ENCODE measurements at regions of chr5 and their contacts with region 1.

Region 1: DNA sequence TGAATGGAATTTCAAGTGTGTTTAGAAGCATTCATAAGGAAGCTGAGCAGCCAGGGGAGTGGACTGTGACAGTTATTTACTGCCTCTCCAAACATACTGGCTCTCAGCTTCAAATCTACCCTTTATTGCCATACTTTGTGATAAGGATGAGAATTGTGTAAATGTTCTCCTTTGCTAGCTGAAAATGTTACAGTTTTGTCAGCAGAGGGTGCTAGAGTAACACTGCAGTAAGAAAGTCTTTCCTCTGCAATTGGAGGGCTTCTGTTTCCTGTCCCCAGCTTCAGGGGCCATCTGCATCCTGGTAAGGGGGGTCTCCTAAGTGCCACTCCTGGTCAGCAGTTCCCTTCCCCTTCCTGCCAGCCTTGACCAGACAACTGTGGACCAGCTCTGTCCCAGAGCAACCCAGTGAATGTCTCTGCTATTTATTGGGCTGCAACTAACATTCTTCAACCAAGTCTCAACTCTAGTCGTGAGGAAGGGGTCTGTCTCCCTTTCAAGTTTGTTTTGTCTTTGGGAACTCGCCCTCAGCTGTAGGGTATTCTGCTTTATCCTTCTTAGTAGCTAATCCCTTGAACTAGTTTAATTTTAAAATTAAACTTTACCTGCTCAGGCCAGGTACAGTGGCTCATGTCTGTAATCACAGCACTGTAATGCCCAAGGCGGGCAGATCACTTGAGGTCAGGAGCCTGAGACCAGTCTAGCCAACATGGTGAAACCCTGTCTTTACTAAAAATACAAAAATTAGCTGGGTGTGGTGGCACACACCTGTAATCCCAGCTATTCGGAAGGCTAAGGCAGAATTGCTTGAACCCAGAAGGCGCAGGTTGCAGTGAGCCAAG is 45.3 kb downstream of the RAPGEF6 start:
- DNase-seq: peak in 6 of 9 experiments; percentile 8 to 80 (median 47)
- ATAC-seq: peak; percentile 77
- H3K4me3 ChIP-seq: no peak overlapping the region
- H3K4me3 Mint-ChIP-seq: no peak overlapping the region
- H3K27ac ChIP-seq: no peak overlapping the region
- H3K27ac Mint-ChIP-seq: no peak overlapping the region
- H3K4me1 ChIP-seq: peaks cover 13% of the 10 kb centered on the region
- H3K4me1 Mint-ChIP-seq: peaks cover 50% of the 10 kb centered on the region
- H3K27me3 ChIP-seq: no peaks in the 10 kb centered on the region
- H3K27me3 Mint-ChIP-seq: no peaks in the 10 kb centered on the region
- CTCF ChIP-seq: peak; percentile 89

Region 2: DNA sequence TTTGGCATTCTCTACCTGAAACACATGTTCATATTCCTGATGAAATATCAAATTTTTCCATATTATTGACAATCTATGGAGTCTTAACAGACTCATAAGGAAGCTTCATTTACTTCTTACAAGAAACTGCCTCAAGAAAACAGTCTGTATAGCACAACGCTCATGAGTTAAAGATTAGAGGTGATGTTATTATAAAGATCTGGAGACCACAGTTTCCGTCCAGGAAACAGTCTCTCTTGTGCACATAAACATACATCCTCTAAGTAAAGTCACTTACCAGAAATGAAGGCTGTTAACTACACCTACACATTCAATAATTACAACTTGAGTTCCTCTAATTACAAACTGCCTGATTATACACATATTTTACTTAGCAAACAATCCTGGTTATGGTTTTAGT is 41.6 kb before region 1 on chr5:
- CTCF ChIA-PET with region 1: interaction called, 4 read pairs
- POLR2A ChIA-PET with region 1: interaction called, 3 read pairs
- intact Hi-C with region 1: loop called in 1 of 2 experiments (anchors 5 kb)
- DNase-seq: peak in 2 of 9 experiments; percentile 61 to 78
- ATAC-seq: peak; percentile 95
- H3K4me3 ChIP-seq: peak overlapping the region; percentile 51 to 55
- H3K4me3 Mint-ChIP-seq: peak overlapping the region; percentile 95
- H3K27ac ChIP-seq: peak overlapping the region; percentile 56 to 67
- H3K27ac Mint-ChIP-seq: peak overlapping the region; percentile 97
- H3K4me1 ChIP-seq: peaks cover 44% of the 10 kb centered on the region
- H3K4me1 Mint-ChIP-seq: peaks cover 63% of the 10 kb centered on the region
- H3K27me3 ChIP-seq: no peaks in the 10 kb centered on the region
- H3K27me3 Mint-ChIP-seq: no peaks in the 10 kb centered on the region
- CTCF ChIP-seq: no peak

Region 3: DNA sequence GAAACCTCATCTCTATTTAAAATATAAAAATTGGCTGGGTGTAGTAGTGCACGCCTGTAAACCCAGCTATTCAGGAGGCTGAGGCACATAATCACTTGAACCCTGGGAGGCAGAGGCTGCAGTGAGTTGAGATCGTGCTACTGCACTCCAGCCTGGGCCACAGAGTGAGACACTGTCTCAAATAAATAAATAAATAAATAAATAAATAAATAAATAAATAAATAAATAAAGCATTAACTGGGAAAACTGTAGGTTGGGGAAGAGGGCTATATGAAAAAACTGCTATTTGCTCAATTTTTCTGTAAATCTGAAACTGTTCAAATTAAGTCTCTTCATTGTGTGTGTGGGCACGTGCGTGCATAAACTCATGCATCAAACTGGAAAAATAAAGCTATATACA is 105.2 kb after region 1 on chr5:
- CTCF ChIA-PET with region 1: interaction called, 4 read pairs
- POLR2A ChIA-PET with region 1: no interaction called
- intact Hi-C with region 1: loop called in 1 of 2 experiments (anchors 5 kb)
- DNase-seq: no peak
- ATAC-seq: no peak
- H3K4me3 ChIP-seq: no peak overlapping the region
- H3K4me3 Mint-ChIP-seq: no peak overlapping the region
- H3K27ac ChIP-seq: no peak overlapping the region
- H3K27ac Mint-ChIP-seq: no peak overlapping the region
- H3K4me1 ChIP-seq: no peaks in the 10 kb centered on the region
- H3K4me1 Mint-ChIP-seq: no peaks in the 10 kb centered on the region
- H3K27me3 ChIP-seq: no peaks in the 10 kb centered on the region
- H3K27me3 Mint-ChIP-seq: no peaks in the 10 kb centered on the region
- CTCF ChIP-seq: no peak

Region 4: DNA sequence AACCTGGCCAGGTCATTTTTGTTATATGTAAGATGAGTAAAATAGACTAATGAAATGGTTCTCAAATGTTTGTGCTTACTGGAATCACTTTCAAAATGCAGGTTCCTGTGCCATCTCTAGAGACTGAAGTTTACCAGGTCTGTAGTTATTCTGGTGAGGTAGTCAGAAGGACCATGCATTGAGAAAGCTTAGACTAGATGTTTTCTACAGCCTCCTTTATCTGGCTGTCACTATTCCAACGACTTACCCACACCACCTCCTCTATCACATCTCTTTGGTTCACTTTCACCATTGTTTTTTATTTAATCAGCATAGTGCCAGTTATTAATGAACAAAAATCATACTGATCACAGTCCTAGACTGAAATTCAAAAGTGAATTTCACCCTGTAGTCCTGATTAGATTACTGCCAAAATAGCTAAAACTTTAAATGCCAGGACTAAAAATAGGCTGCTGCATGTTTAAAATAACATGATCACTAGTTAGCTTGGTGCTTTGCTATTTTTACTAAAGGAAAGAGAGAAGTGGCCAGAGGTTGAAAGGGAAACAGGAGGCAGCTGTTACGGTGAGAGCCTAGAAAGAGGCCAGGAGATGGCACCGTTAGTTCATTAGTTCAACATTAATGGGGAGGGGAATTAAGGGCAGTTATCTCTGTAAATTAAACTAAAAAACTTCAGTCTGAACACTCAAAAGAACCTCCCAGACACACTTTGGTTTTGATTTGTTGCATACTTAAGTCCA is 221.0 kb after region 1 on chr5:
- CTCF ChIA-PET with region 1: interaction called, 11 read pairs
- POLR2A ChIA-PET with region 1: interaction called, 5 read pairs
- intact Hi-C with region 1: loop called in 1 of 2 experiments (anchors 1 kb)
- DNase-seq: peak in 2 of 9 experiments; percentile 26 to 43
- ATAC-seq: no peak
- H3K4me3 ChIP-seq: no peak overlapping the region
- H3K4me3 Mint-ChIP-seq: no peak overlapping the region
- H3K27ac ChIP-seq: no peak overlapping the region
- H3K27ac Mint-ChIP-seq: no peak overlapping the region
- H3K4me1 ChIP-seq: no peaks in the 10 kb centered on the region
- H3K4me1 Mint-ChIP-seq: no peaks in the 10 kb centered on the region
- H3K27me3 ChIP-seq: no peaks in the 10 kb centered on the region
- H3K27me3 Mint-ChIP-seq: no peaks in the 10 kb centered on the region
- CTCF ChIP-seq: no peak

Region 5: DNA sequence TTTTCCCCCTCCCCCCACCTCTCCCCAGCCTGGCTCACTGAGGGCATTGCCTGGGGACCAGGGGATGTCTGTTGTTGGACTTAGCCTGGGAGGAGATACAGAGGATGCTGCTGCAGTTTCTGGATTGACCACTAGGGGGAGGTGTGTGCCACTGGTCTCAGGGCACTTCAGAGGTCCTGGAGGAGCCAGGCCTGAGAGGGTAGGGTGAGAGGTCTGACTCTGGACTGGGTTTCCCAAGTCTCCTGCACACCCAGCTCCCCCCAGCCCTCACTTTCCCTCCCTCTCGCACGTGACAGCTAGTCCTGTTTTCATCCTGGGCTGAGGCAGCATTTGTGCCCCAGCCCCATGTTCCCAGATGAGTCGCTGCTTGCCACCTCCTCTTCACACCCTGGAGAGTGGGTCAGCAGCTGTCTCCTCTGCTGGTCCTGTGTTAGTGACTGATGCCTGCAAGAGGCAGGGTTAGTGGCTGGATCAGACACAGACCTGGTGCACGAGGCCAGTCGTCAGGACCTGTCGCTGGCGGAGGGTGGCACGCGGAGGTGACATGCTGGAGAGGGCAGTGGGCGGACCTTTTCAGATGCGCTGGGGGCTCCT is 475.1 kb after region 1 on chr5:
- CTCF ChIA-PET with region 1: interaction called, 83 read pairs
- POLR2A ChIA-PET with region 1: no interaction called
- intact Hi-C with region 1: loop called (anchors 1 kb)
- DNase-seq: peak; percentile 56 to 85 (median 80)
- ATAC-seq: peak; percentile 77
- H3K4me3 ChIP-seq: no peak overlapping the region
- H3K4me3 Mint-ChIP-seq: no peak overlapping the region
- H3K27ac ChIP-seq: no peak overlapping the region
- H3K27ac Mint-ChIP-seq: no peak overlapping the region
- H3K4me1 ChIP-seq: no peaks in the 10 kb centered on the region
- H3K4me1 Mint-ChIP-seq: peaks cover 2% of the 10 kb centered on the region
- H3K27me3 ChIP-seq: no peaks in the 10 kb centered on the region
- H3K27me3 Mint-ChIP-seq: no peaks in the 10 kb centered on the region
- CTCF ChIP-seq: peak; percentile 97